ENCODE measurements at regions of chr20 and their contacts with region 1.

Region 1: DNA sequence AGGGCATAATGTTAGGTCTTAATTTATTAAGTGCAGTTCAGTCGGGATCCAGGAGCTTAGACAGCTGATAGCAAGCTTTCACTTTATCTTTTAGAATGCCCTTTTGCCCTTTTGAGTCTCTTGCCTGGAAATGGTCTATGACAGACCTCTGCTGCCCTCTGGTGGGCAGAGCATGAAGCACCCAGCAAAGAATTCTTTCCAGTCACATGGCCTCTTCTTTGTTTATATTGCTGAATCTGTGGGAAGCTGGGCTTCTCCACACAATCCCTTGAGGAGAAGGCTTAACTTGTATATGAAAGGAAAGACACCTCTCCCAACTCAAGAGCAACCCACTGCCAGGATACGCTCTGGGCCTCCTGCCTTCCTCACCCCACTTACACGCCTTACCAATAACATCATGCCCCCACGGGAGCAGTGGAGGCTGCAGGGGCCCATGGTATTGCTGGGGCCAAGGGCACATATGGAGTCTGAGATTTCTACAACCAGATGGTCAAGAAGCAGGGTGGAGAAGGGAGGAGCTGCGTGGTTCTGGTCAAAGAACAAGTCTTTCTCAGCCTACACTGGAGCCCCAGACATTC is 20.4 kb downstream of the WFDC3 start:
- DNase-seq: peak; percentile 66
- H3K4me3 Mint-ChIP-seq: no peak overlapping the region
- H3K27ac Mint-ChIP-seq: no peak overlapping the region
- H3K4me1 Mint-ChIP-seq: peaks cover 6% of the 10 kb centered on the region
- H3K27me3 Mint-ChIP-seq: peaks cover 14% of the 10 kb centered on the region

Region 2: DNA sequence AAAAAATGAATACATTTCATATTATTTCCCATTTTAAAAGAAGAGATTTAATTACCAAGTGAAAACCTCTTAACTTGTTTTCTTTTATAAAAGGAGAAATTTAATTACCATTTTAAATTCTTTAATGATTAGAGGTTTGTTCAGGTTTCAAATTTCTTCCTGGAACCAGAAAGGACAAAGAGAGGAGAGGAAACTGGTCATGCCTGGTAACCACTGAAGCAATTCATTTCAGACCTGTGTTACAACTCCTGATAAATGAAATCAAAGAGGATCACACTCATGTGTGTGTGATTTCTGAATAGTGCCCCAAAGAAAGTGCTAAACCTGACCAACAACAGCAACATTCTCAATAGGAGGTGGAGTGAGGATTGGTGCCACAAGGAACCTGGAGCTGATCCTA is 504.3 kb before region 1 on chr20:
- intact Hi-C with region 1: no loop called
- DNase-seq: no peak
- H3K4me3 Mint-ChIP-seq: no peak overlapping the region
- H3K27ac Mint-ChIP-seq: no peak overlapping the region
- H3K4me1 Mint-ChIP-seq: no peaks in the 10 kb centered on the region
- H3K27me3 Mint-ChIP-seq: peaks cover 29% of the 10 kb centered on the region

Region 3: GRCh38 chr20:45318948-45319347 is 452.3 kb before region 1 on chr20:
- intact Hi-C with region 1: loop called (anchors 1 kb)
- DNase-seq: no peak
- H3K4me3 Mint-ChIP-seq: peak overlapping the region; percentile 62
- H3K27ac Mint-ChIP-seq: peak overlapping the region; percentile 93
- H3K4me1 Mint-ChIP-seq: peaks cover 63% of the 10 kb centered on the region
- H3K27me3 Mint-ChIP-seq: peaks cover 3% of the 10 kb centered on the region

Region 4: DNA sequence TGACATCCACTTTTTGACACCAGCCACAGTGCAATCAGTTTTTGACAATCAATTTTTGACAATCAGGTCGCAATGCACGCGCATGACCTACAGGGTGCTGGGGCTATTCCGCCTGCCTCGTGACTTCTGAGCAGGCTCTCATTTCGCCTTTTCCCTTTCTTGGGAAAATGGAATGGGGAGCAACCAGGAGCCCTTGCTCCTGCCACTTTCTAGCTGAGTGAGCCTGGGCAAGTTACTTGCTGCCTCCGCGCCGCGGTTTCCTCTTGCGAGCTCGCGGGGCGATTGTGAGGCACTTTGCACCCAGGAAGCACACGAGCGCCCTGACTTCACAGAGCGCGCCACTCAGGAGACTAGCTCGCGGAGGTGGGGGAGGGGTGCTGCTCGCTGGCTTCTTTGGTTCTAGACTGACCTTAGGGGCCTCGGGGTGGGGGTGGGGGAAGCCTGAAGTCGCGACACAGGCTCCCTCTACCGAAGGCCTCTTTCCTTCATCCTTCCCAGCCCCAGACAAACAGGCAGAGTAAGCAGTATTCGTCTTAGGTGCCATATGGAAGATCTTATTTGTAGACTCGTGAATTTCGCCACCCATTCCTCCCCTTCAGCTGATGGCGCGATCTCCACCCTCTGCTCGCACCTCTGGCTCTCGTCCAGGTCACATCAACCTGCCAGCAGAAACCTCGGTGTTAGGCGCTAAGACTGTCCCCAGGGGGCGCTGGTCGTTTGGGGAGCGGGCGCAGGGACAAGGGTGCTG is 397.7 kb before region 1 on chr20:
- intact Hi-C with region 1: loop called (anchors 1 kb)
- DNase-seq: peak; percentile 79
- H3K4me3 Mint-ChIP-seq: peak overlapping the region; percentile 78
- H3K27ac Mint-ChIP-seq: peak overlapping the region; percentile 84
- H3K4me1 Mint-ChIP-seq: peaks cover 22% of the 10 kb centered on the region
- H3K27me3 Mint-ChIP-seq: no peaks in the 10 kb centered on the region

Region 5: GRCh38 chr20:45456632-45457031 is 314.6 kb before region 1 on chr20:
- intact Hi-C with region 1: loop called (anchors 1 kb)
- DNase-seq: no peak
- H3K4me3 Mint-ChIP-seq: no peak overlapping the region
- H3K27ac Mint-ChIP-seq: no peak overlapping the region
- H3K4me1 Mint-ChIP-seq: no peaks in the 10 kb centered on the region
- H3K27me3 Mint-ChIP-seq: peaks cover 10% of the 10 kb centered on the region

Region 6: DNA sequence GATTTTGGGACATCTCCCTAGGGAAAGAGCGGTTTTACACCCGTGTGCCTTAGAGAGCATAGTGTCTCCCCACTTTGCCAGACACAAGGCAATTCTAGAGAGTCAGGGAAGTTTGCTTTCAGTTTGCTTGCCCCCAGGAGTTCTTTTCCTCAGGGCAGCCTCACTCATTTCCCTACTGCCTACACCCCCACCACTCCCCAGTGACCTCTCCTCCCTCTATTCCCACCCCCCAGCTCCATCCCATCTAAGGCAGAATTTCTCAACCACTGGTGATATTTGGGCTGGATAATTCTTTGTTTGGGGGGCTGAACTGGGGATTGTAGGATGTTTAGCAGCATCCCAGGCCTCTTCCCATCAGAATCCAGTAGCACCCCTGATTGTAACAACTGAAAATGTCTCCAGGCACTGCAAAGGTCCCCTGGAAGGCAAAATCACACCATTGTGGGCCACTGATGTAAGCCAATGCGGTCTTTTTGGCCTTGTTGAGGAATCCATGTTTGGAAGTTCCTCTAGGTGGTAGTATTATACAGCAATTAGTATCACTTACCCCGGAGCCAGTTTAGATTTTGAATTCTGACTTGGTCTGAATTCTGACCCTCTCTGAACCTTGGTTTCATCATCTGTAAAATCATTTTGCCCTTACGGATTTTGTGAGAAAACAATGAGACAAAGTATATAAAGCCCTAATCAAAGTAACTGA is 225.4 kb before region 1 on chr20:
- intact Hi-C with region 1: loop called (anchors 1 kb)
- DNase-seq: no peak
- H3K4me3 Mint-ChIP-seq: no peak overlapping the region
- H3K27ac Mint-ChIP-seq: no peak overlapping the region
- H3K4me1 Mint-ChIP-seq: no peaks in the 10 kb centered on the region
- H3K27me3 Mint-ChIP-seq: peaks cover 21% of the 10 kb centered on the region

Region 7: DNA sequence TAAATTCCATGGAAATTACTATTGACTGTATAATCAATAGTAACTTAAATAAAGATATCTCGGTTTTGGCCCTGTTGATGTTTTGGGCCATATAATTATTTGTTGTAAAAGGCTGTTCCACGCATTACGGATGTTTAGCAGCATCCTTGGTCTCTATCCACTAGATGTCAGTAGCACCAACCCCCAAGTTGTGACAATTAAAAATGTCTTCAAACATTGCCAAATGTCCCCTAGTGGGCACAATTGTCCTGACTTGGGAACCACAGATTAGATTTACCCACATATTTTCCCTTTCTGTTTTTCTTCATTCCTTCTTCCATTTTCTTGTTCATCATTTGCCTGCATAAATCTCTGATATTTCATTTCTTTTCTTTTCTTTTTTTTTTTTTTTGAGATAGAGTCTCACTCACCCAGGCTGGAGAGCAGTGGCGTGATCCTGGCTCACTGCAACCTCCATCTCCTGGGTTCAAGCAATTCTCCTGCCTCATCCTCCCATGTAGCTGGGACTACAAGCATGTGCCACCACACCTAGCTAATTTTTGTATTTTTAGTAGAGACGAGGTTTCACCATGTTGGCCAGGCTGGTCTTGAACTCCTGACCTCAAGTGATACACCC is 178.6 kb before region 1 on chr20:
- intact Hi-C with region 1: loop called (anchors 1 kb)
- DNase-seq: no peak
- H3K4me3 Mint-ChIP-seq: no peak overlapping the region
- H3K27ac Mint-ChIP-seq: no peak overlapping the region
- H3K4me1 Mint-ChIP-seq: no peaks in the 10 kb centered on the region
- H3K27me3 Mint-ChIP-seq: peaks cover 9% of the 10 kb centered on the region

Region 8: GRCh38 chr20:45629496-45630100 is 141.7 kb before region 1 on chr20 and contains the start of gene WFDC10A:
- intact Hi-C with region 1: loop called (anchors 1 kb)
- DNase-seq: no peak
- H3K4me3 Mint-ChIP-seq: no peak within 1 kb of the TSS
- H3K27ac Mint-ChIP-seq: no peak within 1 kb of the TSS
- H3K4me1 Mint-ChIP-seq: no peaks in the 10 kb centered on the region
- H3K27me3 Mint-ChIP-seq: peaks cover 12% of the 10 kb centered on the region
- total RNA-seq, gene WFDC10A: not detected in 2 replicates

Region 9: DNA sequence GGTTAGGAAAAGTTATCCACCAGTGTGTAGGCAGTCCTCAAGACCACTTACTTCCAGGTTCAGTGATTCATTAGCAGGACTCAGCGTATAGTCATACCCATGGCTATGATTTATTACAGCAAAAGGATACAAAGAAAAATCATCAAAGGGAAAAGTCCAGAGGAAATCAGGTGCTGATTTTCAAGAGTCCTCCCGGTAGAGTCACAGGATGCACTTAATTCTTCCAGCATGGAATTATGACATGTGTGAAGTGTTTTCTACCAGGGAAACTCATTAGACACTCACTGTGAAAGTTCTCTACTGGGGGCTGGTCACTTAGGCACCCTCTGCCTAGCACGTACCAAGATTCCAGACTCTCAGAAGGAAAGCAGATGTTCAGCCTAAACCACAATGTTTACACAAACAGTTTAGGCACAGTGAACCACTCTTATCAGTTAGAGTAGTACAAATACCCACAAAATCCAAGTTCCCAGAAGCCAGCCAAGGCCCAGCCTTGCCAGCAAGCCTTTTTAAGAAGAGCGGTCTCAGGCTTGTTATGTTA is 10.2 kb after region 1 on chr20:
- intact Hi-C with region 1: no loop called
- DNase-seq: no peak
- H3K4me3 Mint-ChIP-seq: no peak overlapping the region
- H3K27ac Mint-ChIP-seq: no peak overlapping the region
- H3K4me1 Mint-ChIP-seq: peaks cover 29% of the 10 kb centered on the region
- H3K27me3 Mint-ChIP-seq: peaks cover 4% of the 10 kb centered on the region

Region 10: DNA sequence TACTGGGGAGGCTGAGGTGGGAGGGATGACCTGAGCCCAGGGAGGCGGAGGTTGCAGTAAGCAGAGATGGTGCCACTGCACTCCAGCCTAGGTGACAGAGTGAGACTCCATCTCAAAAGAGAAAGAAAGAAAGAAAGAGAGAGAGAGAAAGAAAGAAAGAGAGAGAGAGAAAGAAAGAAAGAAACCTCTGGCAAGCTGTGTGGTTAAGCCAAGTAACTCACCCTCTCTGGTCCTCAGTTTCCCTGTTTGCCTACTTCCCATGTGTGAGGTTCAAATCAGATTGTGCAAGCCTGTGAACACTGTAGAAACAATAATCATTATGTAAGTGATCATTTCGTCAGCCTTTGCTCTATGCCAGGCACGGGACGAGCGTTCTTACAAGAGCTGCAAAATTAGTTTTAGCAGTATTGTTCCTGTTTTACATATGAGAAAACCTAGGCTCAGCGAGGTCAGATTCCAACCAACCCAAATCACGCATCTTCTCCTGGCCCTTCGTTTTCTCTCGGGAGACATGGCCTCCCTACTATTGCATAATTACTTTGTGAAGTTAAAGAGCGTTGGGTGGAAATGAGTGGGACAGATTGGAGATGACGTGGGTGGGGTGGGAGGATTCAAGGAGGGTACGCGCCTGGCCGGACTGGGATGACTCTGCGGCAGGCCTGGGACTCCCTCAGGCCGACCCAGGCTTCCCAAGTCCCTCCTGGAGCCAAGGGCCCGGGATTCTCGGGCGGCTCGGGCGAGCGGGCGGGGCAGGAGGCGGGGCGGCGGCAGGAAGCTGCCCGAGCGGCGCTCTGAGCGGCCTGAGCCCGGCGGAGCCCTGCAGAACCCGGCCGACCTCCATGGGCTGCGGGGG is 62.0 kb after region 1 on chr20 and contains the start of gene SNX21:
- intact Hi-C with region 1: no loop called
- DNase-seq: peak; percentile 12
- H3K4me3 Mint-ChIP-seq: peak within 1 kb of the TSS; percentile 85
- H3K27ac Mint-ChIP-seq: peak within 1 kb of the TSS; percentile 31
- H3K4me1 Mint-ChIP-seq: peaks cover 9% of the 10 kb centered on the region
- H3K27me3 Mint-ChIP-seq: peaks cover 4% of the 10 kb centered on the region
- total RNA-seq, gene SNX21: 0.75 and 1.1 TPM in 2 replicates

Measured in activated T-helper 1 cell treated with anti-CD3 and anti-CD28 coated beads, Interleukin-12 subunit alpha, Interleukin-12 subunit beta, Interleukin-2, Interleukin-4 antibody, amounts not matched to agents 30 ng/mL and 10 ng/mL and 1 ng/mL, durations not matched to agents 14 hours and 24 hours and 36 hours (primary cell).